ENCODE measurements at regions of chr20 and their contacts with region 1.

Region 1: DNA sequence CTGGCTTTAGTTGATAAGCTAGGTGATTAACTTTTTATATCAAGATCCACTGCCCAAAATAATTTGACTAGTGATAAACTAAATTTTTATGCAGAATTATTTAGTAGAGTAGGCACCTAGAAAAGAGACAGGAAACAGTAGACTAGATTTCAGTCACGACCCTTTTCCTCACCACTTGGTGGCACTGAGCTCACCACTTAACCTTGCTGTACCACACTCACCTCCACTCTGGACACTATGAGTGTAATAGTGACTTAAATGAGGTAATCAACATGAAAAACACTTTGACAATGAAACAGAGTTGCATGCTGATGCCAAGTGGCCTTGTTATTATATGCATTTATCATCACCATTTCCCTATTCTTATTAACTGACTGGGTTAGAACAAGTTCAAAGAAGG is 730.4 kb downstream of the KIF16B start:
- DNase-seq: no peak
- ATAC-seq: no peak

Region 2: DNA sequence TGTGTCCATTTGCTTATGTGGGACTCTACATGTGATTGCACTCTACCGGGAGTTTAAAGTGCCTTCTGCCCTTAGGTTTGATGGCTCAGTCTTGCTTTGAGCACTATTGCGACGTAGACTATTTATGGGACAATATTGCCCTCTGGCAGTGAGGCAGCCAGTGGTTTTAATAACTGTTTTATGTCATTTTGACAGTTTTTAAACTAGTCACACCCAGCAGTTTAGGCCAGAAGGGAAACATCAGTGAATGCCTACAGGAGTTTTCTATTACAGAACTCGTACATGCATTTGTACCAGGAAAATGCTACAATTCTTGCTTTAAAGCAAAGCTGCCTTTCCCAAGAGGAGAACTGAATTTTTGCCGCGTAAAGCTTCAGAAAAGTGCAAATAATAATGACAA is 83.3 kb before region 1 on chr20:
- intact Hi-C with region 1: no loop called
- DNase-seq: no peak
- ATAC-seq: no peak

Region 3: DNA sequence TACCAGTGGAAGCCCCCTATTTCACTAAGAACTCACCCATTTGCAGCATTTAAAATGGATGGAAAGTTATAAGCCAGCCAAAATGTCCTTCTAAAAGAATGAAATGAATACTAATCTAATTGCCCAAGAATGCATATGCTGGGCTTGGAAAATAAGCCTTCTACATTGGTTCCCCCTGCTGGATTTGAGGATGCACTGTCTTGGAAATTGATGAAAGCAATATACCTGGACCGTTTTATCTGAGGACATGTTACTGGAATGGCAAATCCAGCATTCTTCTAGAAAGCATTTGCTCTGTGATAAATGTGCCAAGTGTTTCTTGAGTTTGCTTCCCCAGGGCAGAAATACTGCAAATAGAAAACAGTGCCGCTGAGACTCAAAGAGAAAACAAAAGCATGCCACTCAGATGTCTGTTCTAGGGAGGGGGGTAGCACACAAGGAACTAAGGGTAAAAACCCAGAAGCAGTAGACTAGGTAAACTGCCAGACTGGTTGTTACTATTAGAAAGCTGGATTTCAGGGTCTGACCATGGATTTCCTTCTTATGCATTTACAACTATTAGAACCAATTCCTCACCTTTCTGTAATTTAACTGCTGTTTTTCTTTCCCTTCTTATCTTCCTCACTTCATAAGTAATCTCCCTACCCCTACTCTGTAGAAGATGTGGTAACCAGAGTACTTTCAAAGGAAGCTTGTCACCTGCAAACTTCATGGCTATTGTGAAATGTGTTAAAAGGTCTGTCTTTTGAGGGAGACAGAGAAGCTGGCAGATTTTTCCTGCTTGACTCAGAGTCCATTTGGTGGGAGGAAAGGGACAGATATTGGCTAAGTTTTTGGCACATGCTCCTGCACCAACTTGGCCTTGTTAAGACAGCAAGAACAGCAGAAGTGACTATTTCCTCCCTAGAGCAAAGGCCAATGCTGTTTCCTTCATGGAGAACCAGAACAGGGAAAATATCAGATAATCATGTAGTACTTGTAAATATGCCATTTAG is 87.7 kb after region 1 on chr20:
- intact Hi-C with region 1: no loop called
- DNase-seq: no peak
- ATAC-seq: no peak

Region 4: GRCh38 chr20:16241915-16242314 is 399.0 kb after region 1 on chr20:
- intact Hi-C with region 1: loop called (anchors 5 kb)
- DNase-seq: no peak
- ATAC-seq: peak; percentile 80